Vagina (tissue), 2 donors: ENCODE measurements at regions of chr9 and their contacts with region 1.

Region 1: GRCh38 chr9:78369639-78370219 is 72.8 kb downstream of the PSAT1 start:
- DNase-seq: no peak
- H3K4me3 ChIP-seq: no peak overlapping the region
- H3K27ac ChIP-seq: no peak overlapping the region
- H3K4me1 ChIP-seq: no peaks in the 10 kb centered on the region
- H3K27me3 ChIP-seq: no peaks in the 10 kb centered on the region
- CTCF ChIP-seq: peak; percentile 21 to 65 (median 51)
- POLR2A ChIP-seq: no peak

Region 2: DNA sequence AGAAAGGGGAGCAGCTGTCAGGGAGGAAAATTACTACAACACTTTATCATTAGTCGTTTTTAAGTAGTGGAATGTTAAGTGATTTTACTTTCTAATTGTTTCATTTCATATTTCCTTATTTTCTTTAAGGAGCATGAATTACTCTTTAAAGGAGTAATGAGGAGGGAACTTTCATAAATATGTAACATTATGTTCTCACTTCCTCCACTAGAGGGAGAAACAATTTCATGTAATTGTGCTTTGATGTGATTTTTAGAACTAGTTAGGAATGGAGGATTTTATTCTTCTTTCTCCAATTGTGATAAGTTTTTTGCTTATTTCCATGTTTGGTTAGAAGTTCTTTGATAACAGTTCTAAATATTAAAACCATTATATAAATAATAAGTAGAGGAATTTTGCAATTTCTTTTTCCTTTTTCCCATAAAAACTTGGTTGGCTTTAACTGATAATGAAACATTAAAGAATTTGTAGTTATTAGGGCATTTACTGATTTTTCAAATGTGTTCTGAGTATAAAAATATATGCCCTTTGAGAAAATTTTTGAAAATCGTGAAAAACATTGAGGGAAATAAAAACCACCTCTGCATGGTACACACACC is 108.2 kb before region 1 on chr9:
- intact Hi-C with region 1: loop called (anchors 5 kb)
- DNase-seq: no peak
- H3K4me3 ChIP-seq: no peak overlapping the region
- H3K27ac ChIP-seq: no peak overlapping the region
- H3K4me1 ChIP-seq: no peaks in the 10 kb centered on the region
- H3K27me3 ChIP-seq: no peaks in the 10 kb centered on the region
- CTCF ChIP-seq: peak; percentile 45 to 73 (median 55)
- POLR2A ChIP-seq: no peak